Sciatic nerve (tissue), 2 donors: ENCODE measurements at regions of chr4 and their contacts with region 1.

Region 1: GRCh38 chr4:118888666-118889311 is at the start of gene SYNPO2:
- DNase-seq: peak; percentile 88
- ATAC-seq: peak; percentile 97
- total RNA-seq, gene SYNPO2: 113 TPM

Region 2: GRCh38 chr4:118684873-118685811 is 203.6 kb before region 1 on chr4 and contains the start of gene METTL14:
- intact Hi-C with region 1: no loop called
- DNase-seq: peak; percentile 96
- ATAC-seq: peak; percentile 99
- total RNA-seq, gene METTL14: 61.5 TPM

Region 3: DNA sequence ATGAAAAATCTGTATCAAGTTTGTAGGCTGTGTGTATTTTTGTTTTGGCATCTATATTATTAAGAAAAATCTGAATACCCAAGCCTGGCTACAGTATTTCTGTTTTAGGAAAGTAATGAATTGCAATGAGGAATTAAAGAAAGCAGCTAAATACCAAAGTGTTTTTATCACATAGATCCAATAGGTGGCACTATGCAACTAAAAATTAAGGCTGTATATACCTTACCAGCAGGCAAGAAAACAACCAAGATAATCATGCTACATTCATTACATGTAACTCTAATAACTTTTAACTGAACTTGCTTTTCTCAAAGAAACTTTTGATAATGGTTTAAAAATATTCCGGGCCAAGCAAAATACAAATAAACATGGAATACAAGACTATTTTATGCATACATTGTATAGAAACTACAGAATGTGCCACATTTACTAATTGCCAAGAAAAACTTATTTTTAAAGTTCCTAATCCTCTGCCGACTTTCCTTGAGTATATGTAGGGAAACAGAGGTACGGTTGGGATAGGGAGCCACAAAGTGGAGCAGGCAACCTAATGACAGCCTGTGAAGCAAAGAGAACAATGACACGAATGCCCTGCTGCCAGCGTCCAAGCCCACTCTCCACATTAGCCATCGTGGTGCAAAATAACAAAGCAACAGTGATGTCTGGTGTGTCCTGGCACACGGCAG is 116.6 kb before region 1 on chr4:
- intact Hi-C with region 1: loop called (anchors 10 kb)
- DNase-seq: no peak
- ATAC-seq: peak; percentile 85